ENCODE measurements at regions of chr4 and their contacts with region 1.

Region 1: GRCh38 chr4:38132107-38132673 is 172.0 kb downstream of the PTTG2 start:
- DNase-seq: peak; percentile 13 to 78 (median 67)
- ATAC-seq: peak; percentile 78
- H3K4me3 ChIP-seq: peak overlapping the region; percentile 10
- H3K4me3 Mint-ChIP-seq: peak overlapping the region in 9 of 10 donors; percentile 23 to 78 (median 75)
- H3K27ac ChIP-seq: peak overlapping the region; percentile 21
- H3K27ac Mint-ChIP-seq: peak overlapping the region; percentile 87 to 97 (median 90)
- H3K4me1 ChIP-seq: peaks cover 37 to 56% of the 10 kb centered on the region in 2 donors
- H3K4me1 Mint-ChIP-seq: peaks cover 37 to 73% (median 57%) of the 10 kb centered on the region in 7 donors
- H3K27me3 ChIP-seq: no peaks in the 10 kb centered on the region
- H3K27me3 Mint-ChIP-seq: peaks cover 0 to 2% (median 0%) of the 10 kb centered on the region in 5 donors

Region 2: DNA sequence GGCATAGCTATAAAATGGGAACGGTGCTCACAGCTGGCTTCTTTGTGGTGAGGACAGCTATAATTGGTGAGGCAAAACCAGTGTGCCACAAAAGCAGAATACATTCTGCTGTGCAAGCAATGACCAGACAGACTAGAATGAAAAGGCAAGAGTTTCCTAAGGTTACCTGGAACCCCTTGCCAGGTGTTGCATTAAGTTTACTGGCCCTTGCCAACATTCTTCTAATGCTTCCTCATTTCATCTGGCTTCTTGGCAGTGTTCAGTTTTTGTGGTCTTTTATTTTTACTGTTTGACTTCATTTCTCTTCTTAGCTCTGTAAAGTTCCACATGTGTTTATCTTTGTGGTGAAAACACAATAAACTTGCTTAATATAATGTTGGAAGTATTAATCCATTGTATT is 40.6 kb before region 1 on chr4:
- CTCF ChIA-PET with region 1: no interaction called
- POLR2A ChIA-PET with region 1: no interaction called
- intact Hi-C with region 1: loop called in 1 of 2 experiments (anchors 5 kb)
- DNase-seq: no peak
- ATAC-seq: no peak
- H3K4me3 ChIP-seq: no peak overlapping the region
- H3K4me3 Mint-ChIP-seq: no peak overlapping the region
- H3K27ac ChIP-seq: no peak overlapping the region
- H3K27ac Mint-ChIP-seq: no peak overlapping the region
- H3K4me1 ChIP-seq: no peaks in the 10 kb centered on the region
- H3K4me1 Mint-ChIP-seq: peaks cover 3 to 29% (median 14%) of the 10 kb centered on the region in 7 donors
- H3K27me3 ChIP-seq: no peaks in the 10 kb centered on the region
- H3K27me3 Mint-ChIP-seq: no peaks in the 10 kb centered on the region

Region 3: GRCh38 chr4:38145741-38146140 is 13.6 kb after region 1 on chr4:
- CTCF ChIA-PET with region 1: no interaction called
- POLR2A ChIA-PET with region 1: no interaction called
- intact Hi-C with region 1: no loop called
- DNase-seq: no peak
- ATAC-seq: no peak
- H3K4me3 ChIP-seq: no peak overlapping the region
- H3K4me3 Mint-ChIP-seq: no peak overlapping the region
- H3K27ac ChIP-seq: no peak overlapping the region
- H3K27ac Mint-ChIP-seq: no peak overlapping the region
- H3K4me1 ChIP-seq: no peaks in the 10 kb centered on the region
- H3K4me1 Mint-ChIP-seq: peaks cover 0 to 2% (median 0%) of the 10 kb centered on the region in 7 donors
- H3K27me3 ChIP-seq: no peaks in the 10 kb centered on the region
- H3K27me3 Mint-ChIP-seq: no peaks in the 10 kb centered on the region

Region 4: GRCh38 chr4:38310446-38311043 is 178.4 kb after region 1 on chr4:
- CTCF ChIA-PET with region 1: no interaction called
- POLR2A ChIA-PET with region 1: no interaction called
- intact Hi-C with region 1: loop called (anchors 1 to 2 kb)
- DNase-seq: peak in 8 of 9 donors; percentile 70 to 84 (median 79)
- ATAC-seq: peak; percentile 96
- H3K4me3 ChIP-seq: peak overlapping the region; percentile 12
- H3K4me3 Mint-ChIP-seq: peak overlapping the region; percentile 37 to 80 (median 70)
- H3K27ac ChIP-seq: peak overlapping the region; percentile 44
- H3K27ac Mint-ChIP-seq: peak overlapping the region; percentile 65 to 96 (median 85)
- H3K4me1 ChIP-seq: peaks cover 29 to 34% of the 10 kb centered on the region in 2 donors
- H3K4me1 Mint-ChIP-seq: peaks cover 24 to 70% (median 60%) of the 10 kb centered on the region in 7 donors
- H3K27me3 ChIP-seq: no peaks in the 10 kb centered on the region
- H3K27me3 Mint-ChIP-seq: peaks cover 0 to 45% (median 0%) of the 10 kb centered on the region in 5 donors

Region 5: GRCh38 chr4:38625508-38625907 is 493.3 kb after region 1 on chr4:
- CTCF ChIA-PET with region 1: no interaction called
- POLR2A ChIA-PET with region 1: no interaction called
- intact Hi-C with region 1: no loop called
- DNase-seq: peak in 7 of 9 donors; percentile 26 to 59 (median 33)
- ATAC-seq: peak; percentile 67
- H3K4me3 ChIP-seq: no peak overlapping the region
- H3K4me3 Mint-ChIP-seq: peak overlapping the region in 8 of 10 donors; percentile 9 to 57 (median 39)
- H3K27ac ChIP-seq: no peak overlapping the region
- H3K27ac Mint-ChIP-seq: peak overlapping the region in 7 of 9 donors; percentile 53 to 81 (median 70)
- H3K4me1 ChIP-seq: peaks cover 0 to 9% of the 10 kb centered on the region in 2 donors
- H3K4me1 Mint-ChIP-seq: peaks cover 8 to 27% (median 21%) of the 10 kb centered on the region in 7 donors
- H3K27me3 ChIP-seq: no peaks in the 10 kb centered on the region
- H3K27me3 Mint-ChIP-seq: peaks cover 0 to 4% (median 0%) of the 10 kb centered on the region in 5 donors

Region 6: GRCh38 chr4:38663801-38664705 is 531.9 kb after region 1 on chr4 and contains the start of gene KLF3:
- CTCF ChIA-PET with region 1: no interaction called
- POLR2A ChIA-PET with region 1: interaction called, 3 read pairs
- intact Hi-C with region 1: loop called in 1 of 2 experiments (anchors 5 kb)
- DNase-seq: peak in 7 of 9 donors; percentile 91 to 95 (median 93)
- ATAC-seq: peak; percentile 86
- H3K4me3 ChIP-seq: peak within 1 kb of the TSS; percentile 64
- H3K4me3 Mint-ChIP-seq: peak within 1 kb of the TSS; percentile 85 to 100 (median 99)
- H3K27ac ChIP-seq: peak within 1 kb of the TSS; percentile 98
- H3K27ac Mint-ChIP-seq: peak within 1 kb of the TSS; percentile 85 to 100 (median 95)
- H3K4me1 ChIP-seq: peaks cover 33 to 50% of the 10 kb centered on the region in 2 donors
- H3K4me1 Mint-ChIP-seq: peaks cover 40 to 57% (median 53%) of the 10 kb centered on the region in 7 donors
- H3K27me3 ChIP-seq: no peaks in the 10 kb centered on the region
- H3K27me3 Mint-ChIP-seq: peaks cover 0 to 63% (median 0%) of the 10 kb centered on the region in 5 donors
- total RNA-seq, gene KLF3: 21.0 to 142 (median 132) TPM

Region 7: GRCh38 chr4:38856524-38857337 is 724.5 kb after region 1 on chr4 and contains the start of gene TLR6:
- CTCF ChIA-PET with region 1: no interaction called
- POLR2A ChIA-PET with region 1: no interaction called
- intact Hi-C with region 1: loop called in 1 of 2 experiments (anchors 1 kb)
- DNase-seq: peak in 8 of 9 donors; percentile 37 to 90 (median 83)
- ATAC-seq: peak; percentile 83
- H3K4me3 ChIP-seq: peak within 1 kb of the TSS; percentile 14
- H3K4me3 Mint-ChIP-seq: peak within 1 kb of the TSS in 9 of 10 donors; percentile 62 to 81 (median 67)
- H3K27ac ChIP-seq: peak within 1 kb of the TSS; percentile 49
- H3K27ac Mint-ChIP-seq: peak within 1 kb of the TSS; percentile 76 to 93 (median 90)
- H3K4me1 ChIP-seq: peaks cover 0 to 26% of the 10 kb centered on the region in 2 donors
- H3K4me1 Mint-ChIP-seq: peaks cover 28 to 52% (median 46%) of the 10 kb centered on the region in 7 donors
- H3K27me3 ChIP-seq: no peaks in the 10 kb centered on the region
- H3K27me3 Mint-ChIP-seq: peaks cover 0 to 6% (median 0%) of the 10 kb centered on the region in 5 donors
- total RNA-seq, gene TLR6: 1.00 to 8.8 (median 1.9) TPM

Region 8: DNA sequence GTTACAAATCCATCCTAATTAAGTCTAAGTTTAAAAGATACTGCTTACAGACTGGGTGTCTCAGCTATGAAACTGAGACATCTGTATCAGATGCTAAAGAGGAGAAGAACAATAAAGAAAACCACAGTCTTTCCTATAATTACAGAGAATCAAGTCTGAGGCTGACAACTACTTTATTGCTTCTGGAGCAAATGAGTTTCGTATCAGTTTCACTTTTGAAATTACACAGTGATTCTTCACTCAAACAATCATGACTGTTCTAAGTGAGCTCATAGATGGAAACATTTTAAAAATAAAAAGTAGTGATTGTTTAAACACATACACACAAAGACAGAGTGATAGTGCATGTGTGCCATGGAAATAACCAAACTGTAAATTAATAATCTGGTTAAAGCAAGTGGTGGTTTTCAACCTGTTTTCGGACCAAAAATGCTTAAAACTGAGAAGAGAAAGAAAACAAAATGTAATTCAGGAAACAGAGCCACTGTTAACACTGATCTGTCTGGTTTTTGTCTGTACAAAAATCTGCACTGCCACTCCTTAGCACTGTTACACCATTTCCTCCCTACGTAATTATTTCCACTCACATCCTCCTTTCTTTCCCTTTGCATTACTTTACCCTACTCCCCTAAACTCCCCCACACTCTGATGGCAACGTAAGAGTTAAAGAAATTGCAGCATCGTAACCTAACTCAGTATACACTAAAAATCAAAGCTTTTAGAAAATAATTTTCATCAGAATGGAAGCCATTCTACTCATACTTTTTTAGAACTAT is 1221.5 kb after region 1 on chr4:
- CTCF ChIA-PET with region 1: no interaction called
- POLR2A ChIA-PET with region 1: no interaction called
- intact Hi-C with region 1: loop called in 1 of 2 experiments (anchors 10 kb)
- DNase-seq: peak in 7 of 9 donors; percentile 39 to 71 (median 63)
- ATAC-seq: peak; percentile 86
- H3K4me3 ChIP-seq: peak overlapping the region; percentile 48
- H3K4me3 Mint-ChIP-seq: peak overlapping the region; percentile 82 to 89 (median 84)
- H3K27ac ChIP-seq: peak overlapping the region; percentile 70
- H3K27ac Mint-ChIP-seq: peak overlapping the region; percentile 88 to 98 (median 95)
- H3K4me1 ChIP-seq: peaks cover 17 to 34% of the 10 kb centered on the region in 2 donors
- H3K4me1 Mint-ChIP-seq: peaks cover 20 to 75% (median 59%) of the 10 kb centered on the region in 7 donors
- H3K27me3 ChIP-seq: no peaks in the 10 kb centered on the region
- H3K27me3 Mint-ChIP-seq: no peaks in the 10 kb centered on the region